PC-3 (cell line): ENCODE measurements at regions of chr14 and their contacts with region 1.

Region 1: GRCh38 chr14:59632381-59632780 is 55.8 kb upstream of the CCDC175 start:
- DNase-seq: peak; percentile 87
- ATAC-seq: peak; percentile 73
- H3K4me3 ChIP-seq: no peak overlapping the region
- H3K27ac ChIP-seq: no peak overlapping the region
- H3K4me1 ChIP-seq: no peaks in the 10 kb centered on the region
- H3K27me3 ChIP-seq: peaks cover 75% of the 10 kb centered on the region
- CTCF ChIP-seq: peak; percentile 100

Region 2: DNA sequence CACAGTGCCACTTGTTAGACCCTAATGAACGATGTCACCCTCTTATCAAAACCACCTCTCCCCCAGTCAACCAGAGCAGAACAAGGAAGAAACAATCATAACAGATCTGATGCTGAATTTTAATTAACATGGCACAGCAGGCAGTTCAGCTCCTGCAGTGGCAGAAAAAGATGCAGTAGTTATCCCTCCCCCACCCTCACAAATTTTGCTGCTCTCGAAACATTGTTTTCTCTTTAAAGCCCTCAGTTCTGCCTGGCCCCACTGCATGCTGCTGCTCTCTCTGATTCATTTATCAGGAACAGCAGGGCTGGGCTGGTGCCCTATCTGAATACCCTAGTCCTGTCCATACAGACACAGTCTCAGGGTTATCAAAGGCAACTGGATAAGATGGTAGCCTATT is 68.0 kb before region 1 on chr14:
- CTCF ChIA-PET with region 1: no interaction called
- POLR2A ChIA-PET with region 1: no interaction called
- intact Hi-C with region 1: no loop called
- DNase-seq: no peak
- ATAC-seq: no peak
- H3K4me3 ChIP-seq: no peak overlapping the region
- H3K27ac ChIP-seq: no peak overlapping the region
- H3K4me1 ChIP-seq: peaks cover 31% of the 10 kb centered on the region
- H3K27me3 ChIP-seq: peaks cover 21% of the 10 kb centered on the region
- CTCF ChIP-seq: no peak

Region 3: GRCh38 chr14:59688224-59689170 is 56.1 kb after region 1 on chr14:
- CTCF ChIA-PET with region 1: interaction called, 4 read pairs
- POLR2A ChIA-PET with region 1: no interaction called
- intact Hi-C with region 1: loop called (anchors 1 kb)
- DNase-seq: peak; percentile 94
- ATAC-seq: peak; percentile 100
- H3K4me3 ChIP-seq: no peak overlapping the region
- H3K27ac ChIP-seq: no peak overlapping the region
- H3K4me1 ChIP-seq: no peaks in the 10 kb centered on the region
- H3K27me3 ChIP-seq: peaks cover 54% of the 10 kb centered on the region
- CTCF ChIP-seq: peak; percentile 99

Region 4: GRCh38 chr14:59897761-59898383 is 265.5 kb after region 1 on chr14:
- CTCF ChIA-PET with region 1: interaction called, 5 read pairs
- POLR2A ChIA-PET with region 1: no interaction called
- intact Hi-C with region 1: loop called (anchors 1 kb)
- DNase-seq: peak; percentile 87
- ATAC-seq: peak; percentile 80
- H3K4me3 ChIP-seq: no peak overlapping the region
- H3K27ac ChIP-seq: no peak overlapping the region
- H3K4me1 ChIP-seq: no peaks in the 10 kb centered on the region
- H3K27me3 ChIP-seq: peaks cover 70% of the 10 kb centered on the region
- CTCF ChIP-seq: peak; percentile 96

Region 5: DNA sequence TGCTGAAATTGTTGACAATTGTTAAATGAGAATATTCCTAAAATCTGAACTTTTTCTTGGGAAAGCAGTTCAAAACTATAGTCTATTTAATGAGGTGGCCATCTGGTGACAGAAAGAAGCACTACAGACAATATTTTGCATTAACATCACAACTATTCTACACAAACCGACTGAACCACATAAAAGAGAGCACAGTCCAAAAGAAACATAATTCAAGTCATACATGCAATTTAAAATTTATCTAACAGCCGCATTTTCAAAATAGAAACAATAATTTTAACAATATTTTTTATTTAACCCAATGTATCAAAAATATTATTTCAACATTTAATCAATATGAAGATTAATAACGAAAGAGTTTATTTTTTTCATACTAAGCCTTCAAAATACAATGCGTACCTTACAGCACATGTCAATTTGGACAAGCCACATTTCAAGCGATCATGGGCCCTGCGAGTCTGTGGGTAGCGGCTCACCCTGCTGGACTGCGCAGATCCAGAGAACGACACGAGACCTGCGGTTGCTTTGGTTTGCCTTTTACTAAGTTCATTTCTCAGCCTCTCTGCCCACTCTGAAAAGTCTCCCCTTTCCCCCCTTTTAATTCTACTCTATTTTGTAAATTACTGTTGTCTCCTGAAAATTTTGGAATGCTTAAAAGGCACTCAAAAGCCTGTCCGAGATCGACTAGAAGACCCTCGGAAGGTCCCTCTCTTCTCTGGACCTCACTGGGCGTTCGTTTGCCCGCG is 286.6 kb after region 1 on chr14:
- CTCF ChIA-PET with region 1: interaction called, 3 read pairs
- POLR2A ChIA-PET with region 1: no interaction called
- intact Hi-C with region 1: loop called (anchors 1 kb)
- DNase-seq: peak; percentile 71
- ATAC-seq: peak; percentile 80
- H3K4me3 ChIP-seq: peak overlapping the region; percentile 20; the same call in 1 of the 2 replicates
- H3K27ac ChIP-seq: no peak overlapping the region
- H3K4me1 ChIP-seq: peaks cover 5% of the 10 kb centered on the region; the same call in 1 of the 2 replicates
- H3K27me3 ChIP-seq: peaks cover 74% of the 10 kb centered on the region
- CTCF ChIP-seq: peak; percentile 94

Region 6: DNA sequence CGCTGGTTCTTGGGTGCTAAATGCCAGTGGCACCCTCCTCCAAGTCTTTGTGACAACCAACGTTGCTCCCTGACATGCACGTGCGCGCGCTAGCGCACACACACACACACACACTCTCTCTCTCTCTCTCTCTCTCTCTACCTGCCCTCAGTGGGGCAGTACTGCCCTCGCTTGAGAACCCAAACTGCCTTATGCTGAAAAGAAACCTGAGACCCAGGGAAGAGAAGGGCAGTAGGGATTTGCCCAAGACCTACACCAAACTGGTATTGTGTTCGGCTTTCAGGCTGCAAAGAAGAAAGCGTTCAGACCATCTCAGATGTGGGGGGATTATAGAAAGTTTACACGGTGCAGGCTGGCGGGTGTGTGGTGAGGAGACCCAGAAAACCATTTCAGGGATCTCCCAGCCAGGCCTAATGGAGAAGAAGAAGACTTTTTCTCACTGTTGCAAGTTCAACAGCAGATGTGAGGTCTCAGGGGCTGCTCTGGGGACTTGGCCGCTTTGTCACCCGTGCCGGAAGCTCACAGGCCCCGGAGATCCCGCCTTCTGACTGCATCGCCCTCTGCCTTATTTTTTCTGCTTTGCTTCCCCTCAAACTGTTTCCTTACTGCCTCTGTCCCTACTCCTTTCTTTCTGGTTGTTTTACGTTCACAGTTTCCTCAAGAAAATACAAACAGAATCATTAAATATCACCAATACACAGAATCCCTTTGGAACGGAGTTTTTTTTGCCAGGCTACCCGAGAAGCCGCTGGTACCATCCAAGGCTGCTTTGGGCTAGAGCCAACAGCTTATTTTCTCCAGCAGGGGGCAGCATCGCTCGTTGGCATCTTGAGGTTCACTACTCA is 699.0 kb after region 1 on chr14:
- CTCF ChIA-PET with region 1: no interaction called
- POLR2A ChIA-PET with region 1: no interaction called
- intact Hi-C with region 1: no loop called
- DNase-seq: peak; percentile 96
- ATAC-seq: peak; percentile 54
- H3K4me3 ChIP-seq: peak overlapping the region; percentile 48
- H3K27ac ChIP-seq: no peak overlapping the region
- H3K4me1 ChIP-seq: no peaks in the 10 kb centered on the region
- H3K27me3 ChIP-seq: peaks cover 14% of the 10 kb centered on the region; the same call in 1 of the 2 replicates
- CTCF ChIP-seq: peak; percentile 100